ENCODE measurements at regions of chr13 and their contacts with region 1.

Region 1: GRCh38 chr13:111429064-111429558 is 108.7 kb downstream of the TEX29 start:
- DNase-seq: peak in 1 of 2 experiments; percentile 88
- H3K4me3 ChIP-seq: peak overlapping the region; percentile 66 to 79 (median 71)
- H3K27ac ChIP-seq: no peak overlapping the region
- H3K4me1 ChIP-seq: peaks cover 0 to 4% (median 0%) of the 10 kb centered on the region in 4 experiments; a peak in 1 of 7 replicates
- H3K27me3 ChIP-seq: no peaks in the 10 kb centered on the region; a peak in 1 of 7 replicates
- CTCF ChIP-seq: peak; percentile 57 to 65 (median 57)
- EP300 ChIP-seq: no peak
- POLR2A ChIP-seq: no peak
- RAD21 ChIP-seq: peak; percentile 18 to 39; a peak in 2 of 4 replicates

Region 2: DNA sequence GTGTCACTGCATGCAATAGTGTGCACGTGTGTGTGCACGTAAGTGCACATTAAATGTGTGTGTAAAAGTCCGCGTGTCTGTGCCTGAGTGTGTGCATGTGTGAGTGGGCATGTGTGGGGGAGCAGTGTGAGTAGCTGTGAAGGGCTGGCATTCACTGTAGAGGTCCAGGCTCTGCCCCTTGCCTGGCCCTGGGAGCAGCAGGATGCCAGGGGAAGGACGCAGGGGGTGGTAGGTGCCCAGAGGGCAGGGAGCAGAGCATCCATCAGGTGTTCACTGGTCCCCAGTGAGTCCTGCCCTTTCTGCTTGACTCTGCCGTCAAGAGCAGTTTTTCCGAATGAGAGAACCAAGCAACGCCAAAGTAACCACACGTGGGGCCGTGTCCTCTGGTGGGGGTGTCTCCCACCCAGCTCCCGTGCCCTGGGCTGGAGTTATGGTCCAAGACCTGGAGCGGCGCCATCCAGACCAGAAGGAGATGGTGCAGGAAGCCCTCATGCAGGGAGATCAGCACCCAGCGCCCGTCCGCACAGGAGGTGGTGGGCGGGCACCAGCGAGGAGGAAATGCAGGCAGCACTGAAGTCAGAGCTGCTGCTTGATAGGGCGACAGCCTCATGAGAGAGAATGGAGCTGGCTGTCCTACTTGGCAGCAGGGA is 40.1 kb before region 1 on chr13:
- CTCF ChIA-PET with region 1: interaction called, 11 read pairs
- POLR2A ChIA-PET with region 1: no interaction called
- DNase-seq: no peak
- H3K4me3 ChIP-seq: no peak overlapping the region
- H3K27ac ChIP-seq: no peak overlapping the region
- H3K4me1 ChIP-seq: no peaks in the 10 kb centered on the region; a peak in 1 of 7 replicates
- H3K27me3 ChIP-seq: no peaks in the 10 kb centered on the region
- CTCF ChIP-seq: no peak
- EP300 ChIP-seq: no peak
- POLR2A ChIP-seq: no peak
- RAD21 ChIP-seq: no peak

Region 3: GRCh38 chr13:111398715-111399299 is 30.3 kb before region 1 on chr13:
- CTCF ChIA-PET with region 1: interaction called, 19 read pairs
- POLR2A ChIA-PET with region 1: no interaction called
- DNase-seq: no peak
- H3K4me3 ChIP-seq: no peak overlapping the region
- H3K27ac ChIP-seq: no peak overlapping the region
- H3K4me1 ChIP-seq: no peaks in the 10 kb centered on the region; a peak in 1 of 7 replicates
- H3K27me3 ChIP-seq: no peaks in the 10 kb centered on the region
- CTCF ChIP-seq: no peak
- EP300 ChIP-seq: no peak
- POLR2A ChIP-seq: no peak
- RAD21 ChIP-seq: no peak

Region 4: DNA sequence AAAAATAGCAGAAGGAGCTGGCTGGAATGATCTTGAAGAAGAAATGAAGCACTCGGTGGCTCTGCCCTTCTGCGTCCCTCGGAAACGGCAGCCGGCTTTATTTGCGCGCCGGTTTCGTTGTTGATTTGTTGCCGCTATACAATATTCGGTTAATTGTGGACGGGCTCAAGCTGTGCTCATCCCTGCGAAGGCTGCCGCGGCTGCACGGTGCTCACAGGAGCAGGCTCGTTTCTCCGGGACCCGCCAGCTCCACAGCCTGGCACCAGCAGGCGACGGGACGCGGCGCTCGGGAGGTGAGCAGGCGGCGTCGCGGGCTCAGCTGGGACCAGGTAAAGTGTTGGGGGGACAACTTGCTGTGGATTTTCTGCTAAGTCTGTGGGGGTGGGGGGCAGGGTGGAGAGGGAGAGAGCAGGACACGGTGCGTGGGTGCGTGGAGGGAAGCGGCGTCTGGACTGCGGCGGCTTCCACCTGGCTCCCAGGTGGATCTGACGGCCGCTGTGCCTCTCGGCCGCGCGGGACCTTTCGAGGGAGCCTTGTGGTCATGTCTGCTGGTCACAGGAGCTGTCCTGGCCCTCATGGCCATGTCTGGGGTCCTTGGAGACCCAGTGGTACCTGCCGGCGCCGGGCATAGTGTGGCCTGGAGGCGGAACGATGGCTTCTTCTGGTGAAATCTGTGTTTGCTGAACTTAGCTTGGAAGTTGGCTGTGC is 17.8 kb before region 1 on chr13:
- CTCF ChIA-PET with region 1: interaction called, 69 read pairs
- POLR2A ChIA-PET with region 1: interaction called, 3 read pairs
- DNase-seq: no peak
- H3K4me3 ChIP-seq: no peak overlapping the region
- H3K27ac ChIP-seq: no peak overlapping the region
- H3K4me1 ChIP-seq: peaks cover 0 to 6% (median 3%) of the 10 kb centered on the region in 4 experiments; a peak in 2 of 7 replicates
- H3K27me3 ChIP-seq: no peaks in the 10 kb centered on the region
- CTCF ChIP-seq: no peak
- EP300 ChIP-seq: no peak
- POLR2A ChIP-seq: no peak
- RAD21 ChIP-seq: no peak

Region 5: GRCh38 chr13:111575719-111576118 is 146.6 kb after region 1 on chr13:
- CTCF ChIA-PET with region 1: no interaction called
- POLR2A ChIA-PET with region 1: no interaction called
- DNase-seq: no peak
- H3K4me3 ChIP-seq: no peak overlapping the region
- H3K27ac ChIP-seq: no peak overlapping the region
- H3K4me1 ChIP-seq: no peaks in the 10 kb centered on the region
- H3K27me3 ChIP-seq: no peaks in the 10 kb centered on the region
- CTCF ChIP-seq: no peak
- EP300 ChIP-seq: no peak
- POLR2A ChIP-seq: no peak
- RAD21 ChIP-seq: no peak